ENCODE measurements at regions of chr22 and their contacts with region 1.

Region 1: GRCh38 chr22:20058989-20059770 is 20.9 kb upstream of the DGCR8 start:
- DNase-seq: no peak
- H3K4me3 ChIP-seq: no peak overlapping the region
- H3K27ac ChIP-seq: no peak overlapping the region
- H3K4me1 ChIP-seq: peaks cover 26% of the 10 kb centered on the region
- H3K27me3 ChIP-seq: no peaks in the 10 kb centered on the region
- CTCF ChIP-seq: no peak

Region 2: GRCh38 chr22:19779685-19780268 is 279.4 kb before region 1 on chr22:
- CTCF ChIA-PET with region 1: no interaction called
- dilution Hi-C with region 1: no loop called
- in situ Hi-C with region 1: no loop called
- intact Hi-C with region 1: no loop called
- DNase-seq: no peak
- H3K4me3 ChIP-seq: no peak overlapping the region
- H3K27ac ChIP-seq: no peak overlapping the region
- H3K4me1 ChIP-seq: no peaks in the 10 kb centered on the region
- H3K27me3 ChIP-seq: no peaks in the 10 kb centered on the region
- CTCF ChIP-seq: no peak

Region 3: DNA sequence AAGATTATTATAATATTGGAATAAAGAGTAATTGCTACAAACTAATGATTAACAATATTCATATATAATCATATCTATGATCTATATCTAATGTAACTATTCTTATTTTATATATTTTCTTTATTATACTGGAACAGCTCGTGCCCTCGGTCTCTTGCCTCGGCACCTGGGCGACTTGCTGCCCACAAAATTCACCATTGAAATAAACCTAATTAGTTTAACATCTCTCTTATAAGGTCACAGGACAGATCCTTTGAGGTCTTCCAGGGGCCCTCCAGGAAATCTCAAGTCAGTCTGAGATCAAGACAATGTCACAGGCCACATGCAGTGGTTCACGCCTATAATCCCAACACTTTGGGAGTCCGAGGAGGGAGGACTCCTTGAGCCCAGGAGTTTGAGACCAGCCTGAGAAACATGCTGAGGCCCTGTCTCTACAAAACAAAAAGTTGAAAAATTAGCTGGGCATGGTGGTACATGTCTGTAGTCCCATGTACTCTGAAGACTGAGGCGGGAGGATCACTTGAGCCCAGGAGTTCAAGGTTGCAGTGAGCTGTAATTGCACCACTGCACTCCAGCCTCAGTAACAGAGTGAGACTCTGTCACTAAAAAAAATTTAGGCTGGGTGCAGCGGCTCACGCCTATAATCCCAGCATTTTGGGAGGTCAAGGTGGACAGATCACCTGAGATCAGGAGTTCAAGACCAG is 111.0 kb before region 1 on chr22:
- CTCF ChIA-PET with region 1: no interaction called
- dilution Hi-C with region 1: loop called (anchors 5 kb)
- in situ Hi-C with region 1: no loop called
- intact Hi-C with region 1: no loop called
- DNase-seq: no peak
- H3K4me3 ChIP-seq: no peak overlapping the region
- H3K27ac ChIP-seq: no peak overlapping the region
- H3K4me1 ChIP-seq: peaks cover 24% of the 10 kb centered on the region
- H3K27me3 ChIP-seq: no peaks in the 10 kb centered on the region
- CTCF ChIP-seq: no peak

Region 4: GRCh38 chr22:20008221-20008995 is 50.8 kb before region 1 on chr22:
- CTCF ChIA-PET with region 1: no interaction called
- dilution Hi-C with region 1: no loop called
- in situ Hi-C with region 1: no loop called
- intact Hi-C with region 1: no loop called
- DNase-seq: no peak
- H3K4me3 ChIP-seq: no peak overlapping the region
- H3K27ac ChIP-seq: no peak overlapping the region
- H3K4me1 ChIP-seq: peaks cover 23% of the 10 kb centered on the region
- H3K27me3 ChIP-seq: no peaks in the 10 kb centered on the region
- CTCF ChIP-seq: no peak

Region 5: DNA sequence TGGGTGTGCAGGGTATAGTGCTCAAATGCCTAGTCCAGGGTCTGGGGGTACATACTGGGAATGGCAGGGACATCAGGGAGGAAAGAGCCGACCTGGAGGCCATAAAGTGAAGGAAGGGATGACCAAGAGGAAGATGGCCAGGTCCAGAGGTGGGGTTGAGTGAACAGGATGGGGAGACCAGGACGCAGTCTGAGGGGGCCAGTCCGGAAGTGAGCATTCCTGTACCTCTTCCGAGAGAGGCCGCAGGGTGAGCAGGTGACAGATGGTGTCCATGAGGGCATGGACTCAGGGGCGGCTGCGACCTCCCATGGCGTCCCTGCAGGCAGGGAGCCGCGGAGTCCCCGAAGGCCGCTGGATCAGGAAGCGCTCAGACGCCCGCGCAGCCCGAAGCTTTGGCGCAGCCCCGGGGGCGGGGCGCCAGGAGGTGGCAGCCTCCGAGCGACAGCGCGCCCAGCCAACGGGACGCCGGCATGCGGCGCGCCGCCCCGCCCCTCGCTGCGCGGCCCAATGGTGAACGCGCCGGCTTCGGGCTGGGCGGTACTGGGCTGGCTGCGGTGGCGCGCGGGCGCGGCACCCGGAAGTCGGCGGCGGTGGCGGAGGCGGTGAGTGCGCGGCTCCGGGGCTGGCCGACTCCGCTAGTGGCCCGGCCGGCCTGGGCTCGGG is 38.5 kb before region 1 on chr22 and contains the start of gene TANGO2:
- CTCF ChIA-PET with region 1: no interaction called
- dilution Hi-C with region 1: loop called (anchors 5 kb)
- in situ Hi-C with region 1: no loop called
- intact Hi-C with region 1: no loop called
- DNase-seq: peak; percentile 89
- H3K4me3 ChIP-seq: peak within 1 kb of the TSS; percentile 82 to 90 (median 85)
- H3K27ac ChIP-seq: peak within 1 kb of the TSS; percentile 33
- H3K4me1 ChIP-seq: peaks cover 23% of the 10 kb centered on the region
- H3K27me3 ChIP-seq: no peaks in the 10 kb centered on the region
- CTCF ChIP-seq: no peak
- total RNA-seq, gene TANGO2: 22.5 to 45.7 TPM